HEK293 (cell line): ENCODE measurements at regions of chr12 and their contacts with region 1.

Region 1: GRCh38 chr12:120199595-120200306 is 1.2 kb downstream of the RPLP0 start:
- H3K4me3 ChIP-seq: peak overlapping the region; percentile 94
- H3K27ac ChIP-seq: peak overlapping the region; percentile 60
- H3K4me1 ChIP-seq: peaks cover 4% of the 10 kb centered on the region
- CTCF ChIP-seq: no peak

Region 2: GRCh38 chr12:120013659-120014289 is 186.0 kb before region 1 on chr12:
- CTCF ChIA-PET with region 1: no interaction called
- POLR2A ChIA-PET with region 1: no interaction called
- H3K4me3 ChIP-seq: no peak overlapping the region
- H3K27ac ChIP-seq: no peak overlapping the region
- H3K4me1 ChIP-seq: no peaks in the 10 kb centered on the region
- CTCF ChIP-seq: no peak

Region 3: GRCh38 chr12:120041386-120042231 is 158.1 kb before region 1 on chr12:
- CTCF ChIA-PET with region 1: no interaction called
- POLR2A ChIA-PET with region 1: no interaction called
- H3K4me3 ChIP-seq: no peak overlapping the region
- H3K27ac ChIP-seq: no peak overlapping the region
- H3K4me1 ChIP-seq: peaks cover 4% of the 10 kb centered on the region; the same call in 1 of the 2 replicates
- CTCF ChIP-seq: no peak

Region 4: DNA sequence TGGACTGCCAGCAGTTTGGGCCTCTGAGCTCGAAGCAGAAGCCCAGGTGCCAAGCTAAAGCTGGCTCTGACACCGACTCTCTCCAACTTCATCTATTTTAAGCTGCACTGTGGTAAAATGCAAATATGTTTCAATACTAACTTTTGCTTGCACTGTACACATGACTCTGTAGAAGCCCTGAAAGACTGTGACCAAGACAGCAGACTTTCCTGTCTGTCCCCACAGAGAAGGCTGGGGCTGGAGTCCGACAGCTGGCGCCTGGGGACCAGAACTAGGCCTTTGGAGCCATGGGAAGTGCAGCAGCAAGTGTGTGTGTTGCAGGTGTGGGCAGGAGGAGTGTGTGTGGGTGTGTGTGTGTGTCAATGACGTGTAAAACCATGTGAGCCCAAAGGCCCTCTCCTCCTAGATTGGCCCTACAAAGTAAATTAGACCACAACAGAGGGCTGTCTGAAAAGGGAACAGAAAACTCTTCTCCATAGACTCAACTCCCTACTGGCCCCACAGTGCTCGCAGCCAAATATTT is 66.8 kb before region 1 on chr12:
- CTCF ChIA-PET with region 1: no interaction called
- POLR2A ChIA-PET with region 1: interaction called, 11 read pairs
- H3K4me3 ChIP-seq: no peak overlapping the region
- H3K27ac ChIP-seq: no peak overlapping the region
- H3K4me1 ChIP-seq: no peaks in the 10 kb centered on the region
- CTCF ChIP-seq: no peak

Region 5: DNA sequence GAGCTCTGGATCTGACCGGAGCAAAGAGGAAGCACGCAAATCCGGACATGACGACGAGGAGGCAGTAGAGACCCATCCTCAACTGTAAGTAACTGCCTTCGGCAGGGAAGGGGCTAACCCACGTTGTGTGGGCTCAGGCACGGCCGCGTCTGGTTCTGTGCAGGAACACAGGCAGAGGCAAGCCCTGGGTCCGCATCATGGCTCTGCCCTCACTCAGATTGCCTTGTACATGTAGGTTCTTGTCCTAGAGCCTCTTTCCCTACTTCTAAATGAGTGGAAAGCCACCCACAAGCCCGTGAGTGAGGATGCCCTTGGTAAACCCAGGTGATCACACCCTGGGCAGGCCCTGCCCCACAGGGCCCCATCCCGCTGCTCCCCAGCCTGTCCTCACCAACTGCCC is 10.1 kb after region 1 on chr12:
- CTCF ChIA-PET with region 1: interaction called, 11 read pairs
- POLR2A ChIA-PET with region 1: interaction called, 36 read pairs
- H3K4me3 ChIP-seq: no peak overlapping the region
- H3K27ac ChIP-seq: no peak overlapping the region
- H3K4me1 ChIP-seq: no peaks in the 10 kb centered on the region
- CTCF ChIP-seq: no peak

Region 6: DNA sequence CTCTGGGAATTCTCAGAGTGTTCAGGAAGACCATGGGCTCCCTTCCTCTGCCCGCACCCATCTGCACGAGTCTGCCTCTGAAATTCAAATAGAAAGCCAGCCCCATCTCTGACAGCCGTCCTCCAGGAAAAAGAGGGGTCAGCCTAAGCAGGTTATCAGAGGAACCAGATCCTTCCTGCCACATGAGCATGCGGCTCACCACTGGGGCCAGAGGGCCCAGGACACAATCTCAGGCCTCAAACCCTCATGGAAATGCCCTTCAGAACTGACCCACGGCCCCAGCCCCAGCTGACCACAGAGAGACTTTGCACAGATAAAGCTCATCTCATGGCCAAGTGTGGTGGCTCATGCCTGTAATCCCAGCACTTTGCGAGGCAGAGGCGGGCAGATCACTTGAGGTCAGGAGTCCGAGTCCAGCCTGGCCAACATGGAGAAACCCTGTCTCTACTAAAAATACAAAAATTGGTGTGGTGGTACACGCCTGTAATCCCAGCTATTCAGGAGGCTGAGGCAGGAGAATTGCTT is 42.6 kb after region 1 on chr12:
- CTCF ChIA-PET with region 1: interaction called, 3 read pairs
- POLR2A ChIA-PET with region 1: interaction called, 15 read pairs
- H3K4me3 ChIP-seq: no peak overlapping the region
- H3K27ac ChIP-seq: no peak overlapping the region
- H3K4me1 ChIP-seq: no peaks in the 10 kb centered on the region
- CTCF ChIP-seq: no peak

Region 7: GRCh38 chr12:120276734-120277133 is 77.0 kb after region 1 on chr12:
- CTCF ChIA-PET with region 1: interaction called, 3 read pairs
- POLR2A ChIA-PET with region 1: interaction called, 10 read pairs
- H3K4me3 ChIP-seq: no peak overlapping the region
- H3K27ac ChIP-seq: no peak overlapping the region
- H3K4me1 ChIP-seq: no peaks in the 10 kb centered on the region
- CTCF ChIP-seq: no peak

Region 8: DNA sequence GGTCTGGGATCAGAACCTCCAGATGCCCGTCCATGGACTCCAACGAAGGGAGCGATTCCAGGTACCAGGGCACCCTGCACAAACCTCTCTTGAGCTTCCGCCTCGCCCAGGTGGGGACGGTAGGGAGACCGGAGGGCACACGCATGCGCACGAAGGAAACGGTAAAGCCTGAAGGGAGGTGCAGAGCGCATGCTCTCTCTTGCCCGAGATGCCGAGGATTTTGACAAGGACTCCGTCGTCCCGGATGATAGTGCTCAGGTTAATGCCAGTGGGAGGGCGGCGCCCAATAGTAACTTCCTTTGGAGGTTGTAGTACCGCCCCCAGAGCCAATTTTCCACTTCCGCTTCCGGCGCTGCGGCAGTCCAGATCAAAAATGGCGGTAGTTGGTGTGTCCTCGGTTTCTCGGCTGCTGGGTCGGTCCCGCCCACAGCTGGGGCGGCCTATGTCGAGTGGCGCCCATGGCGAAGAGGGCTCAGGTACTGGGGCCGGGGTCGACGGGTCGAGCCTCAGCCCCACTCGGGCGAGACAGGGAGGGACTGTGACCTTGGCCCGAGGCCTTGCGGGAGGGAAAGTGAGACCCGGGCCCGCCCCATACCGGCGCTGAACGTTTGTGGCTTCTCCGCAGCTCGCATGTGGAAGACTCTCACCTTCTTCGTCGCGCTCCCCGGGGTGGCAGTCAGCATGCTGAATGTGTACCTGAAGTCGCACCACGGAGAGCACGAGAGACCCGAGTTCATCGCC is 238.2 kb after region 1 on chr12 and contains the start of gene COX6A1:
- CTCF ChIA-PET with region 1: no interaction called
- POLR2A ChIA-PET with region 1: interaction called, 17 read pairs
- H3K4me3 ChIP-seq: peak within 1 kb of the TSS; percentile 90
- H3K27ac ChIP-seq: peak within 1 kb of the TSS; percentile 75
- H3K4me1 ChIP-seq: no peaks in the 10 kb centered on the region
- CTCF ChIP-seq: peak; percentile 35; the same call in 1 of the 2 replicates